GM10248 (cell line): ENCODE measurements at regions of chr10 and their contacts with region 1.

Region 1: GRCh38 chr10:104059364-104059763 is 26.3 kb downstream of the COL17A1 start:
- DNase-seq: no peak
- CTCF ChIP-seq: no peak

Region 2: GRCh38 chr10:103820101-103821062 is 239.0 kb before region 1 on chr10:
- CTCF ChIA-PET with region 1: no interaction called
- POLR2A ChIA-PET with region 1: no interaction called
- DNase-seq: no peak
- CTCF ChIP-seq: no peak

Region 3: GRCh38 chr10:104072786-104073185 is 13.4 kb after region 1 on chr10:
- CTCF ChIA-PET with region 1: interaction called, 14 read pairs
- POLR2A ChIA-PET with region 1: no interaction called
- DNase-seq: no peak
- CTCF ChIP-seq: no peak